ENCODE measurements at regions of chr1 and their contacts with region 1.

Region 1: GRCh38 chr1:27603681-27604578 is at the start of gene AHDC1:
- DNase-seq: peak; percentile 86 to 96 (median 90)
- ATAC-seq: peak; percentile 84
- H3K4me3 ChIP-seq: peak within 1 kb of the TSS; percentile 78
- H3K4me3 Mint-ChIP-seq: peak within 1 kb of the TSS; percentile 99
- H3K27ac ChIP-seq: peak within 1 kb of the TSS in 1 of 2 donors; percentile 67
- H3K27ac Mint-ChIP-seq: peak within 1 kb of the TSS; percentile 87
- H3K4me1 ChIP-seq: peaks cover 72% of the 10 kb centered on the region
- H3K4me1 Mint-ChIP-seq: peaks cover 54% of the 10 kb centered on the region
- H3K27me3 ChIP-seq: no peaks in the 10 kb centered on the region
- H3K27me3 Mint-ChIP-seq: no peaks in the 10 kb centered on the region
- CTCF ChIP-seq: no peak
- total RNA-seq, gene AHDC1: 20.8 to 22.9 TPM

Region 2: GRCh38 chr1:27300341-27301051 is 303.4 kb before region 1 on chr1:
- CTCF ChIA-PET with region 1: interaction called, 3 read pairs
- POLR2A ChIA-PET with region 1: interaction called, 3 read pairs
- intact Hi-C with region 1: loop called (anchors 1 kb)
- DNase-seq: peak; percentile 61 to 91 (median 74)
- ATAC-seq: peak; percentile 96
- H3K4me3 ChIP-seq: no peak overlapping the region
- H3K4me3 Mint-ChIP-seq: no peak overlapping the region
- H3K27ac ChIP-seq: no peak overlapping the region
- H3K27ac Mint-ChIP-seq: no peak overlapping the region
- H3K4me1 ChIP-seq: peaks cover 8% of the 10 kb centered on the region
- H3K4me1 Mint-ChIP-seq: peaks cover 5% of the 10 kb centered on the region
- H3K27me3 ChIP-seq: no peaks in the 10 kb centered on the region
- H3K27me3 Mint-ChIP-seq: no peaks in the 10 kb centered on the region
- CTCF ChIP-seq: peak; percentile 96

Region 3: DNA sequence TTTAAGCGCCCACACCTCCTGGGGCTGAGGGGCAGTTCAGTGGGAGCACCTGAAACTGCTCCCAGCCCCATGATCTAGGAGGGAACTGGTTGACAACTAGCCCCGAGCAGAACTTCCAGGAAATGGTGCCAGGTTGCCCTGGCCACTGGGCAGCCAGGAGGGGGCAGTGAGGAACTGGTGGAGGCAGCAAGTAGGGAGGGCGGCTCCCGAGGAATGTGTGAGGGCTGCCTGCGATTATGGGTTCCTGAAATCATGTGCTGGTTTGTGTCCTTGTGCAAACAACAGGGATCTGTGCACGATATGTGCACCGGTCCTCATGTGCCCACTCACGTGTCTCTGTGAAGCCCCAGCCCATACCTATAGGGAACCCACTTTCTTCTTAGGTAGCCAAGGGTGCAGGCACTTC is 201.6 kb before region 1 on chr1:
- CTCF ChIA-PET with region 1: no interaction called
- POLR2A ChIA-PET with region 1: interaction called, 5 read pairs
- intact Hi-C with region 1: loop called in 1 of 2 experiments (anchors 2 kb)
- DNase-seq: peak in 5 of 14 experiments; percentile 19 to 57 (median 47)
- ATAC-seq: no peak
- H3K4me3 ChIP-seq: no peak overlapping the region
- H3K4me3 Mint-ChIP-seq: no peak overlapping the region
- H3K27ac ChIP-seq: peak overlapping the region; percentile 10 to 30
- H3K27ac Mint-ChIP-seq: peak overlapping the region; percentile 85
- H3K4me1 ChIP-seq: peaks cover 16% of the 10 kb centered on the region
- H3K4me1 Mint-ChIP-seq: peaks cover 37% of the 10 kb centered on the region
- H3K27me3 ChIP-seq: no peaks in the 10 kb centered on the region
- H3K27me3 Mint-ChIP-seq: no peaks in the 10 kb centered on the region
- CTCF ChIP-seq: no peak

Region 4: DNA sequence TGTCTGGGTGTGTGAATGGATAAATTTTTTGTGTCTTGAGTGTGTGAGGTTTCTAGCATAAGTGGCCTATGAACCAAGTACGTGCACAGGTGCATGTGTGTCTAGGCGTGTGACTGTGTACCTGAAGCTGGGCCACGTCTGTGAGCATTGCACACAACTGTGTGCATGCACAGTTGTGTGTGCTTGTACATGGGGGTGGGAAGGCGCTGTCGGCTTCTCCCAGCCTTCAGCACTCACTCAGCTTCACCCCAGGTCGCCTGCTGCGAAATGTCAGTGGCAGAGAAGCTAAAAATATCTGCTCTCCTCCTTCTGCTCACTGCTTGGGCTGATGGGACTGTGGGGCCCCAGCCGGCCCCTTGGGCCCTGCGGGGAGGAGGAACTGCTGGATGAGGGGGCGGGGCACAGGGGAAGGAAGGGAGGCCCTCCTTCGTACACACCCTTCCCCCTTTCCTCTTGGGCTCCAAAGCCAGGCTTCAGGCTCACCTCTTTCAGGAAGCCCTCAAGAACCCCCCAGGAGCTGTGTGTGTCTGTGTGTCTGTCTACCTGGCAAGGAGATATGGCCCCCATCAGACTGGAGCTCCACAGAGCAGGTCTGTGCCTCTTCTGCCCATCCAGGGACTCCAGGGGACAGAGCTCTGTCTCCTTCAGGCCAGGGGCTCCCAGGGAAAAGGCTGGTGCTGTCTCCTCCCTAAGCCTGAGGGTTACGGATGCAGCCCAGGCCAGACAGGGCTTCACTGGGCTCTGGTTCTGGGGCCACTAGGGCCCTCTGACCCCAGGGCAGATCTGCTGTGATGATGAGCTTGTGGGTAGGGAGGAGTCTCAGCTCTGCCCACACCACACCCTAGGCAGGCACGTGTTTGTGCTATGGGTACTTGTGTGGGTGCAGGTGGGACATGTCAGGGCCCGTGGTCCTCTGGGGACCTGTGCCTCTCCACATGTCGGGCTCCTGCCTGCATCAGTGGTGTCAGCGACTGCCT is 78.3 kb before region 1 on chr1:
- CTCF ChIA-PET with region 1: interaction called, 12 read pairs
- POLR2A ChIA-PET with region 1: interaction called, 6 read pairs
- intact Hi-C with region 1: loop called (anchors 1 kb)
- DNase-seq: peak in 12 of 14 experiments; percentile 18 to 73 (median 53)
- ATAC-seq: peak; percentile 7
- H3K4me3 ChIP-seq: peak overlapping the region; percentile 45
- H3K4me3 Mint-ChIP-seq: peak overlapping the region; percentile 68
- H3K27ac ChIP-seq: peak overlapping the region; percentile 30 to 75
- H3K27ac Mint-ChIP-seq: peak overlapping the region; percentile 96
- H3K4me1 ChIP-seq: peaks cover 82% of the 10 kb centered on the region
- H3K4me1 Mint-ChIP-seq: peaks cover 85% of the 10 kb centered on the region
- H3K27me3 ChIP-seq: no peaks in the 10 kb centered on the region
- H3K27me3 Mint-ChIP-seq: no peaks in the 10 kb centered on the region
- CTCF ChIP-seq: no peak

Region 5: GRCh38 chr1:27568300-27569087 is 35.4 kb before region 1 on chr1:
- CTCF ChIA-PET with region 1: interaction called, 72 read pairs
- POLR2A ChIA-PET with region 1: interaction called, 8 read pairs
- intact Hi-C with region 1: loop called in 1 of 2 experiments (anchors 1 kb)
- DNase-seq: peak; percentile 84 to 98 (median 92)
- ATAC-seq: peak; percentile 91
- H3K4me3 ChIP-seq: peak overlapping the region; percentile 46
- H3K4me3 Mint-ChIP-seq: peak overlapping the region; percentile 67
- H3K27ac ChIP-seq: peak overlapping the region; percentile 49 to 62
- H3K27ac Mint-ChIP-seq: peak overlapping the region; percentile 74
- H3K4me1 ChIP-seq: peaks cover 31% of the 10 kb centered on the region
- H3K4me1 Mint-ChIP-seq: peaks cover 60% of the 10 kb centered on the region
- H3K27me3 ChIP-seq: no peaks in the 10 kb centered on the region
- H3K27me3 Mint-ChIP-seq: no peaks in the 10 kb centered on the region
- CTCF ChIP-seq: peak; percentile 68

Region 6: DNA sequence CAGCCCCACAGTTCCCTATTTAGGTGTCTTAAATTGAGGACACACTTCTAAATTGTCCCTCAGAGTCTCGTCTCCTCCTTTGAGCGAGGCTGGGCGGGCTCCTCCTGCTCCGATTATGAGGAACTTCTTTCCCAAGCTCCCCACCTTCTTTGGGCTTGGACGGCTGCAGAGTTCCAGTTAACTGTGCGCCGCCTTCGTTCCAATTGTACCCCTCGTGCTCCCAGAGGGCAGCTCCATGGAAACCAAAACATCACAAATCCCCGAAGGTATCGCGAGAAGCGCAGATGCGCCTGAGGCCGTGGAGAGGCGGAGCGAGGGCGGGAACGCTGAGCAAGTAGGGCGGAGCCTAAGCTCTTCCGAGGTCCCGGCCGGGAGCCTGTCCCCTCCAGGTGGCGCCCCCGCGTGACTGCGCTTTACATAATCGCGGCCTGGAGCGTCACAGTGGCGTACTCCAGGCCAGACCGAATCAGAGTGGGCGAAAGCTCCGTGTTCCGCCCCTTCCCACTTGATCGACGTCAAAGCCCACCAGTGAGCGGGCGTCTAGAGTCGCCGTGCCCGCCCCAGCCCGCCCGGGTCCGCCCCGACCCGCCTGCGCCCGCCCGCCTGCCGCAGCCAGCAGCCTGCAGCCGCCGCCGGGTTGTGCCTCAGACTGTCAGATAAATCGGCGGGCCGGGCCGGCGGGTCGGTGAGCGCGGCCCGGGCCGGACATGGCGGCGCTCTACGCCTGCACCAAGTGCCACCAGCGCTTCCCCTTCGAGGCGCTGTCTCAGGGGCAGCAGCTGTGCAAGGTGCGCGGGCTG is 121.6 kb after region 1 on chr1 and contains the start of gene FAM76A:
- CTCF ChIA-PET with region 1: interaction called, 5 read pairs
- POLR2A ChIA-PET with region 1: no interaction called
- intact Hi-C with region 1: loop called in 1 of 2 experiments (anchors 5 kb)
- DNase-seq: peak; percentile 99 to 100 (median 99)
- ATAC-seq: peak; percentile 92
- H3K4me3 ChIP-seq: peak within 1 kb of the TSS; percentile 74
- H3K4me3 Mint-ChIP-seq: peak within 1 kb of the TSS; percentile 85
- H3K27ac ChIP-seq: peak within 1 kb of the TSS; percentile 82 to 85
- H3K27ac Mint-ChIP-seq: peak within 1 kb of the TSS; percentile 89
- H3K4me1 ChIP-seq: peaks cover 19% of the 10 kb centered on the region
- H3K4me1 Mint-ChIP-seq: peaks cover 24% of the 10 kb centered on the region
- H3K27me3 ChIP-seq: no peaks in the 10 kb centered on the region
- H3K27me3 Mint-ChIP-seq: no peaks in the 10 kb centered on the region
- CTCF ChIP-seq: peak; percentile 60
- total RNA-seq, gene FAM76A: 26.0 to 28.7 TPM

Region 7: DNA sequence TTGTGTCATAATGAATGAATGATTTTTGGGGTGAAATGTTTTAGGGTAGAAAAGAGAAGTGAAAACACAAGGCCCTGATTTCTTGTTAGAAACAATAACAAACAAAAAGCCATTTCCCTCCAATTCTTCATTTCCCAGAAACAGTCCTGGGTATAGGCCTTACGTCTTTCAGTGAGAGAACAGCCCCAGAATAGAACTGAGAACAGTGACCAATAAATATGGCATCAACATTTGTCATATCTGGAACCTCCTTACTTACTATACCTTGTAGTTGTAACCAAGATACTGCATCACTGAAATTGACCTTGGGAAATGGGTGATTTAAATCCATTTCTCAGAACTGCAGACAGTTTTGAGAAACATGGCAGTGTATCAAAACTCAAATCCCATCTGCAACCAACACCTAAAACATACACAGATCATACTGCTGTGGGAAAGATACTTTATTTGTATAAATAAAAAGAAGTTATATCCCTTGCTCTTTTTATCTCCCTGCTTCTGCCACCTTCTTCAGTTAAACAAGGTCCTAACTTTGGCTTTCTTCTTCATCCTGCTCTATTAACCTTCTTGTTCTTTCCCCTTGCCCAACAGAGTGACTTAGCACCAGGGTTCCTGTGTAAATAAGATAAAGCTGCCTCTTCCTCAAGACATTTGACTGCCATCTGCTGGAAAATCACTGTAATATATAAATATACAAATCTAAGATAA is 375.4 kb after region 1 on chr1:
- CTCF ChIA-PET with region 1: no interaction called
- POLR2A ChIA-PET with region 1: no interaction called
- intact Hi-C with region 1: no loop called
- DNase-seq: peak in 4 of 14 experiments; percentile 17 to 75 (median 72)
- ATAC-seq: peak; percentile 72
- H3K4me3 ChIP-seq: no peak overlapping the region
- H3K4me3 Mint-ChIP-seq: no peak overlapping the region
- H3K27ac ChIP-seq: no peak overlapping the region
- H3K27ac Mint-ChIP-seq: no peak overlapping the region
- H3K4me1 ChIP-seq: no peaks in the 10 kb centered on the region
- H3K4me1 Mint-ChIP-seq: no peaks in the 10 kb centered on the region
- H3K27me3 ChIP-seq: no peaks in the 10 kb centered on the region
- H3K27me3 Mint-ChIP-seq: no peaks in the 10 kb centered on the region
- CTCF ChIP-seq: peak; percentile 73

Measured in CD4-positive, alpha-beta T cell (primary cell).